ENCODE measurements at regions of chr15 and their contacts with region 1.

Region 1: GRCh38 chr15:78709263-78709882 is 68.4 kb upstream of the CHRNB4 start:
- DNase-seq: no peak
- H3K4me3 ChIP-seq: peak overlapping the region; percentile 33
- CTCF ChIP-seq: peak; percentile 85

Region 2: DNA sequence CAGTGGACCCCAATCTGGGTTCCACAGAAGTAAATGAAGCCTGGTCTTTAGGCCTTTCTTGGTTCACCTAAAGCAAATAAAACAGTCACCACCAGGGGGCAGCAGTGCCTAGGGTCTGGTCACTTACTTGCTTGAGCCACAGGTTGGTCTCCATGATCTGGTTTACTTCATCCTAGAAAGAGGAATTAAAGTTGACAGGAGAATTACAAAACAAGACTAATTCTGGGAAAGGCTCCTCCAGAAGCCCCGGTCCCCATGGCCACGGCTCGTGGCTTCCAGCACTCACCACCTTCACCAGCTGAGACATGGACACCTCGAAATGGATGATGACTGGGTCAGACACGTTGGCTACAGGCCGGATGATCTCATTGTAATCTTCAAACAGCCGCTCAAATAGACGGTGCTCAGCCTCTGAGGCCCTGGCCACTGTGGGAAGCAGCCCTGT is 90.9 kb before region 1 on chr15:
- CTCF ChIA-PET with region 1: interaction called, 43 read pairs
- POLR2A ChIA-PET with region 1: no interaction called
- DNase-seq: peak; percentile 52
- H3K4me3 ChIP-seq: no peak overlapping the region
- CTCF ChIP-seq: peak; percentile 77

Region 3: GRCh38 chr15:78638658-78639314 is 70.6 kb before region 1 on chr15:
- CTCF ChIA-PET with region 1: interaction called, 46 read pairs
- POLR2A ChIA-PET with region 1: no interaction called
- DNase-seq: no peak
- H3K4me3 ChIP-seq: no peak overlapping the region
- CTCF ChIP-seq: peak; percentile 53

Region 4: DNA sequence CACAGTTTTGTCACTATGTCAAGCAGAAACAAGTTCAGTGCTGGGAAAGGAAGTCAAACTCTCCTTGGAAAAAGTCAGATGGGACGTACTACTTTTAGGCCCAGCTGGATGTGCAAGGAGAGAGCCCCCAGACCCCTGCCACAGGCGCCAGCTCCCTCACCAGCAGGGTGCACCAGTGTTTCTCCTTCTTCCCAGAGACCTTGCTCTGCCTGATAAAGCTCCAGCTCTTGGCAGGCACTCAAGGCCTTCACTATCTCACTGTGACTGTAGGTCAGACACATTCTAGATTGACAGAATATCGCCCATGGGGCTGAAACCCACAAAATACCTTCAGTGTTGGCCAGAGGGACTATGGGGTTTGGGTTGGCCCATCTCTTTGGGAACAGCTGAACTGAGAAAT is 13.5 kb before region 1 on chr15:
- CTCF ChIA-PET with region 1: interaction called, 17 read pairs
- POLR2A ChIA-PET with region 1: no interaction called
- DNase-seq: no peak
- H3K4me3 ChIP-seq: no peak overlapping the region
- CTCF ChIP-seq: no peak

Region 5: DNA sequence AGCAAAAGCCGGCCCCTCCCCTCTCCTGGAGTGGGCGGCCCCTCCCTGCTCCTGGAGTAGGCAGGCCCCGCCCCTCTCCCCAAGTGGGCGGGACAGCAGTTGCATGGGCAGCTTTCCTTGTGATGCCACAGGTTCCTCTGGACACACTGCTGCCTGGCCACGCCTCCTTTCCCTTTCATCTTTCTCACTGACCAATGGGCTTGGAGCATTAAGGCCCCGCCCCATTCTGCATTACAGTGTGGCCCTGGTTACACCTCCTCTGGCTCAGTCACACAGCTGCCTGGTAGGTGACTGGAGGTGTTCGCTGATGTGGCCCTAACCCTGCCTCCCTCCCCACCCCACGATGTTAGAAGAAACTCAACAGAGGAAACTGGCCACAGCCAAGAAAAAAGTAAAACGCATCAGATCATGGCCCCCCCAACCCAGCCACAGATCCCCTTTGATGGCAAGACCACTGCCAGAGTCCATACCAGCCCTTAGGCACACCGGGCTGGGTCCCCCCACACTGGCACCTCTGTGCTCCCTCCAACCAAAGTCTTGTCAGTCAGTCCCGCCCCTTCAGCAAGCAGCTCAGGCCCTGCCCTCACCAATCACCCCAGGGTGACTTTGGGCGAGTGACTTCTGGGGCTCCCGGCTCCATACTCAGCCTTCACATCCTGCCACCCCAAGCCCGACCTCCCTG is 17.6 kb after region 1 on chr15:
- CTCF ChIA-PET with region 1: interaction called, 16 read pairs
- POLR2A ChIA-PET with region 1: no interaction called
- DNase-seq: no peak
- H3K4me3 ChIP-seq: no peak overlapping the region
- CTCF ChIP-seq: no peak

Region 6: GRCh38 chr15:79798311-79798710 is 1088.9 kb after region 1 on chr15:
- CTCF ChIA-PET with region 1: no interaction called
- POLR2A ChIA-PET with region 1: no interaction called
- DNase-seq: no peak
- H3K4me3 ChIP-seq: no peak overlapping the region
- CTCF ChIP-seq: no peak